Activated CD8-positive, alpha-beta T cell treated with anti-CD3 and anti-CD28 coated beads for 36 hours (primary cell): ENCODE measurements at regions of chr13 and their contacts with region 1.

Region 1: DNA sequence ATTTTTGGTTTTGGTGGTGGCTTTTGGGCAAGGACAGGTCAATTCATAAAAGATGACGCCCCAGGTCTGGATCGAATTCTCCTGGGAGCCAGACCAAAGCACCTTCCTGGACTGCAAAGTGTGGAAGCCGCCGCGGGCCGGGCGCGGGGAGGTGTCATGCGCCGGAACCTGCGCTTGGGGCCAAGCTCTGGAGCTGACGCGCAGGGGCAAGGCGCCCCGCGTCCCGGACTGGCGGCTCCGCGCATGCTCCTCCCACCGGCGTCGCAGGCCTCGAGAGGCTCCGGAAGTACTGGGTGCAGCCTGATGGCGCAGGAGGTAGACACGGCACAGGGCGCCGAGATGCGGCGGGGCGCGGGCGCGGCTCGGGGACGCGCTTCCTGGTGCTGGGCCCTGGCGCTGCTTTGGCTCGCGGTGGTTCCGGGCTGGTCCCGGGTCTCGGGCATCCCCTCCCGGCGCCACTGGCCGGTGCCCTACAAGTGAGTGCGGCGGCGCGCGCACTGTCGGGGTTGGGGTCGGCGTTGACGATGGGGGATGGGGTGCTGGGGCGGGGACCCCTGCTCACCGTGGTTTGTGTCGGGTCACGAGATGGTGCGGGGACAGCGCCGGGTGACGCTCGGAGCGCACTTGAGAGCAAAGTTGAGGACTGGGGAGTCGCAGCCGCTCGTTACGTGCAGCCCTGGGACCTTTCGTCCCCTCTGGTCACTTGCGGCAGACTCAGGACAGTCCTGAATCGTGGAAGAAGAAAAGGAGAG is at the start of gene CLN5:
- DNase-seq: peak; percentile 95
- ATAC-seq: peak; percentile 94
- H3K4me3 Mint-ChIP-seq: peak within 1 kb of the TSS; percentile 96
- H3K27ac Mint-ChIP-seq: peak within 1 kb of the TSS; percentile 99
- H3K4me1 Mint-ChIP-seq: peaks cover 27% of the 10 kb centered on the region
- H3K27me3 Mint-ChIP-seq: peaks cover 4% of the 10 kb centered on the region
- CTCF ChIP-seq: no peak
- total RNA-seq, gene CLN5: 14.5 to 16.9 TPM

Region 2: GRCh38 chr13:76886292-76887075 is 105.5 kb before region 1 on chr13 and contains the start of gene KCTD12:
- CTCF ChIA-PET with region 1: interaction called, 5 read pairs
- POLR2A ChIA-PET with region 1: no interaction called
- intact Hi-C with region 1: loop called (anchors 5 kb)
- DNase-seq: peak; percentile 78
- ATAC-seq: peak; percentile 78
- H3K4me3 Mint-ChIP-seq: peak within 1 kb of the TSS; percentile 89
- H3K27ac Mint-ChIP-seq: peak within 1 kb of the TSS; percentile 86
- H3K4me1 Mint-ChIP-seq: peaks cover 17% of the 10 kb centered on the region
- H3K27me3 Mint-ChIP-seq: peaks cover 19% of the 10 kb centered on the region
- CTCF ChIP-seq: no peak
- total RNA-seq, gene KCTD12: 14.3 to 14.8 TPM

Region 3: GRCh38 chr13:76980075-76980718 is 11.8 kb before region 1 on chr13:
- CTCF ChIA-PET with region 1: interaction called, 29 read pairs
- POLR2A ChIA-PET with region 1: interaction called, 3 read pairs
- intact Hi-C with region 1: no loop called
- DNase-seq: peak; percentile 89
- ATAC-seq: peak; percentile 100
- H3K4me3 Mint-ChIP-seq: peak overlapping the region; percentile 58
- H3K27ac Mint-ChIP-seq: no peak overlapping the region
- H3K4me1 Mint-ChIP-seq: peaks cover 8% of the 10 kb centered on the region
- H3K27me3 Mint-ChIP-seq: peaks cover 28% of the 10 kb centered on the region
- CTCF ChIP-seq: peak; percentile 95

Region 4: DNA sequence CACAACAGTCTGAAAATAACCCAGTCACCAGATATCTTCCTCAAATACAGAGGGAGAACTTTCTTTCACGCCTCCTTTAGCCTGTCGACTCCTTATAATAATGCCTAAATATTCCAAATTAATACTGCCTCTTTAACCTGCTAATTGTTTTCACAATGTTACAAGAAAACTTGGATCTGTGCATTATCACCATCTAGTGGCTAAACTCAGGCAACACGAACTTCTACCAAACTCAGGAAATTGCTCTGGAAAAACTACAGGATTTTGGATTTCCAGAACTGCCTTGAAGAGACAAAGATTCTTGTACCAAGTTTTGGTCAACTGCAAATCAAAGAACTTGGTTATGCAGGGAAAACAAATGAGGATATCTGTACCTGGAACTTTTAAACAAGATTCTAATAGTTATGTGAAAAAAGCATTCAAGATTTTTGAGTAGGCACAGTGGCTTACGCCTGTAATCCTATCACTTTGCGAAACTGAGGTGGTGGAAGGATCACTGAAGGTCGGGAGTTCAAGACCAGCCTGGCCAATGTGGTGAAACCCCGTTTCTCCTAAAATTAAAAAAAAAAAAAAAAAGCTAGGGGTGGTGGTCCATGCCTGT is 10.7 kb after region 1 on chr13:
- CTCF ChIA-PET with region 1: interaction called, 26 read pairs
- POLR2A ChIA-PET with region 1: interaction called, 17 read pairs
- intact Hi-C with region 1: no loop called
- DNase-seq: no peak
- ATAC-seq: no peak
- H3K4me3 Mint-ChIP-seq: no peak overlapping the region
- H3K27ac Mint-ChIP-seq: no peak overlapping the region
- H3K4me1 Mint-ChIP-seq: peaks cover 34% of the 10 kb centered on the region
- H3K27me3 Mint-ChIP-seq: no peaks in the 10 kb centered on the region
- CTCF ChIP-seq: peak; percentile 58

Region 5: GRCh38 chr13:77026818-77027585 is 35.0 kb after region 1 on chr13 and contains the start of gene FBXL3:
- CTCF ChIA-PET with region 1: interaction called, 3 read pairs
- POLR2A ChIA-PET with region 1: interaction called, 49 read pairs
- intact Hi-C with region 1: loop called (anchors 2 kb)
- DNase-seq: peak; percentile 83
- ATAC-seq: peak; percentile 57
- H3K4me3 Mint-ChIP-seq: peak within 1 kb of the TSS; percentile 98
- H3K27ac Mint-ChIP-seq: peak within 1 kb of the TSS; percentile 94
- H3K4me1 Mint-ChIP-seq: peaks cover 43% of the 10 kb centered on the region
- H3K27me3 Mint-ChIP-seq: no peaks in the 10 kb centered on the region
- CTCF ChIP-seq: no peak
- total RNA-seq, gene FBXL3: 32.8 to 34.3 TPM